Activated CD8-positive, alpha-beta T cell treated with anti-CD3 and anti-CD28 coated beads for 36 hours (primary cell): ENCODE measurements at regions of chr1 and their contacts with region 1.

Region 1: DNA sequence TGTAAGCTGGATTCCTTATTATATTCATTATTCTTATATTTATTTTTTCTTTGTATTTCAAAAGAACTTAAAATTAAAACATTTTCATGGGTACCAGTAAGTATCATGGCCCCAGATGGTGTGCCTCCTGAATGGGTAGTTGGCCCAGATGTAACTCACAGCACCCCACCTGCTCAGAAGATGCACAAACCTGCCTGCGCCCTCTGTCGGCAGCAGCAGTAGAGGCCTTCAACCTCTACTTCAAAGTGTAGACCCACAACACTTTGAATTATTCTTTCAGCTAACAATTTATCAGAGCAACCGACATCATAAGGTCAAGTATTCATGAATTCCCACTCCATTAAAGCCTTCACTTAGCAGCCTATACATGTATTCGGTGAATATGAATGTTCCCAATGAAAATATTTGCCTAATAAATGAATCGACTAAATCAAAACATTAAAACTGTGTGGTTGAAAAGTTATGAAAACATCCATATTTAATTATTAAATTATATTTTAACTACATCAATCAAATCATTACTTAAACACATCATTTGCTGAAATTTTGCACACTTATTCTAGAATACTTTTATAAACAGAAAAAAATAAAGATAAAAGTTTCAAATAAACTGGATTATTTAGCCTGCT is 25.4 kb downstream of the PIGM start:
- DNase-seq: peak; percentile 87
- ATAC-seq: peak; percentile 94
- H3K4me3 Mint-ChIP-seq: no peak overlapping the region
- H3K27ac Mint-ChIP-seq: no peak overlapping the region
- H3K4me1 Mint-ChIP-seq: no peaks in the 10 kb centered on the region
- H3K27me3 Mint-ChIP-seq: peaks cover 2% of the 10 kb centered on the region
- CTCF ChIP-seq: peak; percentile 85

Region 2: GRCh38 chr1:159804924-159805323 is 201.5 kb before region 1 on chr1:
- CTCF ChIA-PET with region 1: interaction called, 28 read pairs
- POLR2A ChIA-PET with region 1: no interaction called
- intact Hi-C with region 1: no loop called
- DNase-seq: no peak
- ATAC-seq: no peak
- H3K4me3 Mint-ChIP-seq: no peak overlapping the region
- H3K27ac Mint-ChIP-seq: no peak overlapping the region
- H3K4me1 Mint-ChIP-seq: peaks cover 33% of the 10 kb centered on the region
- H3K27me3 Mint-ChIP-seq: no peaks in the 10 kb centered on the region
- CTCF ChIP-seq: no peak

Region 3: DNA sequence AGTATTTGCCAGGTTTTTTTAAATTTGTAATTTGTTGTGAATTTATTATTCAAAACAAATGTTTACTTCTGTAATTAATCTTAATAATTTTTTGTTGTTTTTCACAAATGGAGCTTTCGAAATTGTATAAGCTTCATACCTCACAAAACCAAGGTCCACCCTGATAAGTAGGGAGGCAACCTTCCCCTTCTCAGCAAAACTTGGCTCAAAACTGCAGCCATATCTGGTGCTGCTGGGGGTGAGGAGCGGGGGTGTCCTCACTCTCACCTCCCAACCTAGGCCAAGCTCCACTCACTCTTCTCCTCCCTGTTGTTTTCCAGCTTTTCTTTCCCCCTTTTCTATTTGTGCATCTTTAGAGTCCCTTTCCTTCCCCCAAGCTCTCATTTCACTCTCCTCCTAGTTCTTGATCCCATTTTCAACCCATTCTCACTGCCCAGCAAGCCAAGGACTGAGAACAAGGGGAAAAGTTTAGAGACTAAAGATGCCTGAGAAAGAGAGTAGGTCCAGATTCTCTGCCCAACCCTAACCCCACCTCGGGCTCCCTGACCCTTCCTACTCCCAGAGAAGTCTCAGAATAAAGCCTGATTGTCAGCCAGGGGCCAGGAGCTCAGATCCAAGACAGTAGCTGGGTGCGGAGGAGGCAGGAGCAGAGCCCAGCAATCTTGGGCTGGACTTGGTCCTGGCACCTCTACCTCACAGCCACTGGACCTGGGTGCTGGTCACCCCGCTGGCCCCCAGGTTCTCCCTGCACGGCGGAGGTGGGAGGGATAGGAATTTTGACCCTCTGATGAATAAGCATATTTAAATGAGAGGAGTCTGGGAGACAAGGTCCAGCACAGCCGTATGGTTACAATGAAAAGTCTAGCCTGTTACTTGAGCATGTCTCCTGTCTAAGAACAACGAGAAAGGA is 98.1 kb before region 1 on chr1:
- CTCF ChIA-PET with region 1: interaction called, 13 read pairs
- POLR2A ChIA-PET with region 1: no interaction called
- intact Hi-C with region 1: no loop called
- DNase-seq: no peak
- ATAC-seq: no peak
- H3K4me3 Mint-ChIP-seq: no peak overlapping the region
- H3K27ac Mint-ChIP-seq: peak overlapping the region; percentile 5
- H3K4me1 Mint-ChIP-seq: peaks cover 34% of the 10 kb centered on the region
- H3K27me3 Mint-ChIP-seq: no peaks in the 10 kb centered on the region
- CTCF ChIP-seq: no peak

Region 4: GRCh38 chr1:159936273-159936904 is 70.0 kb before region 1 on chr1:
- CTCF ChIA-PET with region 1: interaction called, 374 read pairs
- POLR2A ChIA-PET with region 1: interaction called, 3 read pairs
- intact Hi-C with region 1: loop called (anchors 2 kb)
- DNase-seq: peak; percentile 85
- ATAC-seq: peak; percentile 96
- H3K4me3 Mint-ChIP-seq: no peak overlapping the region
- H3K27ac Mint-ChIP-seq: no peak overlapping the region
- H3K4me1 Mint-ChIP-seq: peaks cover 3% of the 10 kb centered on the region
- H3K27me3 Mint-ChIP-seq: peaks cover 2% of the 10 kb centered on the region
- CTCF ChIP-seq: peak; percentile 97

Region 5: GRCh38 chr1:159970932-159971342 is 35.5 kb before region 1 on chr1:
- CTCF ChIA-PET with region 1: interaction called, 54 read pairs
- POLR2A ChIA-PET with region 1: no interaction called
- intact Hi-C with region 1: no loop called
- DNase-seq: no peak
- ATAC-seq: no peak
- H3K4me3 Mint-ChIP-seq: no peak overlapping the region
- H3K27ac Mint-ChIP-seq: no peak overlapping the region
- H3K4me1 Mint-ChIP-seq: no peaks in the 10 kb centered on the region
- H3K27me3 Mint-ChIP-seq: peaks cover 14% of the 10 kb centered on the region
- CTCF ChIP-seq: no peak

Region 6: GRCh38 chr1:160031365-160032164 is 25.1 kb after region 1 on chr1 and contains the start of gene PIGM:
- CTCF ChIA-PET with region 1: interaction called, 59 read pairs
- POLR2A ChIA-PET with region 1: interaction called, 5 read pairs
- intact Hi-C with region 1: no loop called
- DNase-seq: peak; percentile 98
- ATAC-seq: peak; percentile 99
- H3K4me3 Mint-ChIP-seq: peak within 1 kb of the TSS; percentile 88
- H3K27ac Mint-ChIP-seq: peak within 1 kb of the TSS; percentile 81
- H3K4me1 Mint-ChIP-seq: peaks cover 32% of the 10 kb centered on the region
- H3K27me3 Mint-ChIP-seq: no peaks in the 10 kb centered on the region
- CTCF ChIP-seq: no peak
- total RNA-seq, gene PIGM: 3.9 to 4.0 TPM

Region 7: DNA sequence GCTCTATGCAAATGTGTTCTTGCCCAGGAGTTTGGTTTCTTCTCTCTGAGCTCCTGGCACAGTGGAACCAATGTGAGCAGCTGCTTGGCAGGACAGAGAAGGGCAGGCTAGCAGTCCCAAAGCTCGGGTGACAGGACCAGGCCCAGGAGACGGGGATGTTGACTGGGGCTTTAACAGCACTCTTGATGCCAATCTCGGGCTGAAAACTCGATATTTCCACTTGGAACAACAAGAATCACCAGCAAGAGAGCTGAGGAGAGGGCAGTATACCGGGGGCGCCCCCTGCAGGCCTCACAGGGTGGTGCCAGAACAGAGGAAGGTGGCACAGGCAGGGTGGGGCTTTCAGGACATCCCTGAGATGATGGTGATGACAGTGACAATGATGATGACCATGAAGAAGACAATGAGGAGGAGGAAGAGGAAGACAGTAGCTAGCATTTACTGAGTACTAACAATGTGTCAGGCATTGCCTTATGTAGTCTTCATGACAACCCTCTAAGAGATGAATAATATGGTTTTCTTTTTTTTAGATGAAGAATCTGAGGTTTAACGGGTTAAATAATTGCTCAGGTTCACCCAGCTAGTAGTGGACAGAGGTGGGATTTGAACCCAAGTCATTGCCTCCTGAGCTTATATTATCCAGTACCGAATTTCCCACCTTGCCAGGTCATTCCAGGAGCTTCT is 72.2 kb after region 1 on chr1:
- CTCF ChIA-PET with region 1: interaction called, 44 read pairs
- POLR2A ChIA-PET with region 1: interaction called, 3 read pairs
- intact Hi-C with region 1: no loop called
- DNase-seq: peak; percentile 86
- ATAC-seq: peak; percentile 97
- H3K4me3 Mint-ChIP-seq: no peak overlapping the region
- H3K27ac Mint-ChIP-seq: no peak overlapping the region
- H3K4me1 Mint-ChIP-seq: peaks cover 13% of the 10 kb centered on the region
- H3K27me3 Mint-ChIP-seq: peaks cover 50% of the 10 kb centered on the region
- CTCF ChIP-seq: peak; percentile 87